Thyroid gland (tissue), 4 donors: ENCODE measurements at regions of chr7 and their contacts with region 1.

Region 1: GRCh38 chr7:55593515-55594318 is 21.4 kb upstream of the VOPP1 start:
- DNase-seq: peak; percentile 33 to 40
- H3K4me3 ChIP-seq: no peak overlapping the region
- H3K27ac ChIP-seq: no peak overlapping the region
- H3K4me1 ChIP-seq: no peaks in the 10 kb centered on the region
- H3K27me3 ChIP-seq: no peaks in the 10 kb centered on the region
- CTCF ChIP-seq: peak; percentile 12 to 67 (median 29)
- POLR2A ChIP-seq: no peak

Region 2: DNA sequence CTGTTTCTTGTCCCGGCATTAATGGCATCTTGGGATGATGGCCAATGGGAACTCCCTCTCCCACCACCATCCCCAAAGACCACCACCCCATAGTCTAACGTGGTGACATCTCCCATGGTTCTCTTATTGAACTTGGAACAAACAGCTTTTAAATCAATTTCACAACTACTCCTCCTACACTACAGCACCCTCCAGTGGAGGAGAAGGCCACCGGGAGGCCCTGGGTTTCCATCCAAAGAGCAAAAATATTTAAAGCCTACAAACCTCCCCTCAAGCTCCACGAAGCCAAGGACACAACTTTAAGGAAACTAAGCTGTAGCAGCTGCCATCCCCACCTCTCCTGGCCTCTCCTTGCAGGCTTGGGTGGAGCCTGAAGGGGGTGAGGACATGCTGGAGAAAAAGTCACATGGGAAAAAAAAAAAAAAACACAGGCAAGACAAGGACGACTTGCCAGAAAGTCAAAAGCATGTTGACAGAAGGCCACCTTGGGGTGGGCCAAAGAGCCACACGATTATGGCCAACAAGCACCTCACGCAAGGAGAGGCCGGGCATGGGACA is 322.6 kb before region 1 on chr7:
- intact Hi-C with region 1: loop called (anchors 10 kb)
- DNase-seq: peak; percentile 15 to 36
- H3K4me3 ChIP-seq: no peak overlapping the region
- H3K27ac ChIP-seq: no peak overlapping the region
- H3K4me1 ChIP-seq: no peaks in the 10 kb centered on the region
- H3K27me3 ChIP-seq: no peaks in the 10 kb centered on the region
- CTCF ChIP-seq: peak in 2 of 6 experiments; percentile 23 to 30
- POLR2A ChIP-seq: no peak

Region 3: DNA sequence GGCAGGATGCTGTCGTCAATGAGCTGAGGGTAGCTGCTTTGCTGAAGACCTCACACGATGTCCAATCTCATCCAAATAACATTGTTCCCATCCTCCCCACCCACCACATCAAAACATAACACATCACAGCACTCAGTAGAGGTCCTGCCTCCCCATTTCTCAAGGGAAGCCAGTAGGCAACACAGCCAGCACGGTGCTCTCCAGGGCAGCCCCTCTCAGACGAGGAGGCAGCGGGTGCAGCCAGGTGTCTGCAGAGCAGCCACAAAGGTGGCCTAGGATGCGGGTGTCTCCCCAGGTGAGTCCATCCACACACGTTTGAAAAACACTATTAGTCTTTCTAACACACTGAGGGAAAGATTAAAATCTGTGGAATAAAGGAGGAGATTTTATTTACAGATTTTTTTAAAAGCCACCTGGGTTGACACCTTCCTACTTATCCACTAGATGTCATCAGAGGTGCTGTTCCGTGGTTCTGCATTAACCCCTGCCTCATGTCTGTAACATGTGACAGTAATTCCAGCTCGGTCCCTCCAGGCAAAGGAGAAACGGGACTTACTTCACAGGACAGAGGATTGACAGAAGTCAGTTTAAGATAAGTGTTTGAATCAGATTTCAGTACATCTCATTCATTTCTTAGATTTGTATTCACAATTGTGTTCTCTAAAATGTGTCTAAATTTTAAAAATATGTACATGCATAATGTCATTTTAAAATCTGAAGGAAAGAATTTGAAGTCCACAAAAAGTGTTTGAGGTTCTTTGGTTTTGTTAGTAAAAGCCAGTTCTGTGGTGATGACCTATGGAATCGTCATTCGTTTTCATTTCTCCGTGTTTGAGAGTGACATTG is 160.6 kb before region 1 on chr7:
- intact Hi-C with region 1: loop called (anchors 10 kb)
- DNase-seq: no peak
- H3K4me3 ChIP-seq: no peak overlapping the region
- H3K27ac ChIP-seq: no peak overlapping the region
- H3K4me1 ChIP-seq: no peaks in the 10 kb centered on the region
- H3K27me3 ChIP-seq: no peaks in the 10 kb centered on the region
- CTCF ChIP-seq: peak in 4 of 6 experiments; percentile 11 to 45 (median 28)
- POLR2A ChIP-seq: no peak